Endothelial cell of umbilical vein (primary cell): ENCODE measurements at regions of chr1 and their contacts with region 1.

Region 1: GRCh38 chr1:31705080-31705866 is 1.5 kb upstream of the COL16A1 start:
- DNase-seq: no peak
- H3K4me3 ChIP-seq: no peak overlapping the region
- H3K27ac ChIP-seq: no peak overlapping the region
- H3K4me1 ChIP-seq: peaks cover 9% of the 10 kb centered on the region
- H3K27me3 ChIP-seq: peaks cover 0 to 3% of the 10 kb centered on the region in 2 experiments
- CTCF ChIP-seq: peak; percentile 5 to 12
- POLR2A ChIP-seq: no peak

Region 2: DNA sequence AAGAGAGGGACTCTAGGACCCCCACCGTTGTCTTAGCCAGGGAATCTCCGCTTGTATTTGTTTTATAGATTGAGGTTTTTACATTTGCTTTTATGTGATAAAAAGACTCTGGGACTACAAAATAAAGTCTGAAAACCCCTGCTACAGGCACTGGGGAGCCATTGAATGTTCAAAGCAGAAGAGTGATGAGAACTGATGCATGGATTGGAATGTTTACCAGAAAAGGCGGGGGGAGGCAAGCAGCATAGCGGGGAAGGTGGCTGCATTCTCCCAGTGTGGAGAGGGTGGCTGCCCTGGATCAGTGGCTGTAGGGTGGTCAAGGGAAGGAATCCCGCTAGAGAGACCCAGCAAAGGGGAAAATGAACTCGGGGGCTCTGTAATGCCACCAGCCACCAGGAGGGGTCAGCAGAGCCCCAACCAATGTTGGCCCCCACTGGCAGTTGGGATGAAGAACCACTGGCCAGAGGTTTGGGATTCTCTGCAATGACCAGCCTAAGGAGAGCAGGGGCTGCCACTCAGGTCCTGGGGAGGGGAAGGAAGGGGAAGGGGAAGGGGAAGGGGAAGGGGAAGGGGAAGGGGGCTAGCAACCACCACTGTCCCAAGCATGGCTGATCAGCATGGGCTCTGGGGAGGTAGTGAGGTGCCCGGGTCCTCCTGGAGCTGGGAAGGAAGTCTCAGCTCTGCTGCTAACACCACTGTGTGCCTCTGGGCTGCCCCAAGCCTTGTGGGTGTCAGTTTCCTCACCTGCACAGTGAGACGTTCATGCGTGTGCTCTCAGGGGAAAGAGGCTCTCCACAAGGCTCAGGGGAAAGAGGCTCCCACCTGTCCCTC is 41.4 kb before region 1 on chr1:
- CTCF ChIA-PET with region 1: interaction called, 51 read pairs
- POLR2A ChIA-PET with region 1: no interaction called
- dilution Hi-C with region 1: no loop called
- intact Hi-C with region 1: no loop called
- DNase-seq: peak; percentile 48
- H3K4me3 ChIP-seq: no peak overlapping the region
- H3K27ac ChIP-seq: no peak overlapping the region
- H3K4me1 ChIP-seq: no peaks in the 10 kb centered on the region
- H3K27me3 ChIP-seq: no peaks in the 10 kb centered on the region
- CTCF ChIP-seq: peak; percentile 86 to 90
- POLR2A ChIP-seq: no peak

Region 3: DNA sequence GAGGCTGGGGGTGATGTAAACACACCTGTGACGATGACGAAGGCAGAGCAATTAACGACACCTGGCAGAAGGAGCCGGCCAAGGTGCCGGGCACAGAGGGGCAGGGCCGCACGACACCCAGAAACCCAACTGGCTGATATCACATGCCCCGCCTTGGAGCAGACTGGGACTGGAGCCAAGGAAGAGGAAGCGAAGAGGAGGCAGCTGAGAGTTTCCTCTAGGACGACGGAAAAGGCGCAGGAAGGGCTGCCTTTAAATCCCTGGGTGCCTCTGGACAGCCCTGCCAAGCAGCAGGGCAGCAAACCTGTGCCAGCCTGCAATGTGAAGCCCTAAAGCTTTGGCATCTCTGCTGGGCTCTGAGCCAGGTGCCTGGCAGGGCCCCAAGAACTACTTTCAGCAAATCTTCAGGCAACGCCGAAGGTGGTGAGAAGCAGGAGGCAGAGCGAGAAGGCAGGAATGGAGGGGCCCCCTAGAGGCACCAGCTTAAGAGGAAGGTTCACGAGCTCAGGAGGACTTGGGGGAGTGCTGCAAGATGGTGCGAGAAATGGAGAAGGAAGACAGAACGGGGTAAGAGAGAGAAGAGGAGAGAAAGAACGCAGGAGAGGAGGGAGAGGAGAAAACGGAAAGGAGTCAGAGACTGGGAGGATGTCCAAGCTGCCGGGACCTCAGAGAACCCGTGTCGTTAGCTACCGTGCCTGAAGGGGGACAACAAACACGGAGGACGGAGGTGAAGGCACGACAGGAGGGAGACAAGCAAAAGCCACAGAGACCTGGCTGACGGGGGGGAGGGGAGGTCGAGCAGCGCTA is 35.3 kb before region 1 on chr1:
- CTCF ChIA-PET with region 1: interaction called, 51 read pairs
- POLR2A ChIA-PET with region 1: no interaction called
- dilution Hi-C with region 1: no loop called
- intact Hi-C with region 1: no loop called
- DNase-seq: peak; percentile 77
- H3K4me3 ChIP-seq: peak overlapping the region; percentile 7 to 31 (median 21)
- H3K27ac ChIP-seq: no peak overlapping the region
- H3K4me1 ChIP-seq: peaks cover 13% of the 10 kb centered on the region
- H3K27me3 ChIP-seq: no peaks in the 10 kb centered on the region
- CTCF ChIP-seq: peak; percentile 10 to 29
- POLR2A ChIP-seq: no peak

Region 4: DNA sequence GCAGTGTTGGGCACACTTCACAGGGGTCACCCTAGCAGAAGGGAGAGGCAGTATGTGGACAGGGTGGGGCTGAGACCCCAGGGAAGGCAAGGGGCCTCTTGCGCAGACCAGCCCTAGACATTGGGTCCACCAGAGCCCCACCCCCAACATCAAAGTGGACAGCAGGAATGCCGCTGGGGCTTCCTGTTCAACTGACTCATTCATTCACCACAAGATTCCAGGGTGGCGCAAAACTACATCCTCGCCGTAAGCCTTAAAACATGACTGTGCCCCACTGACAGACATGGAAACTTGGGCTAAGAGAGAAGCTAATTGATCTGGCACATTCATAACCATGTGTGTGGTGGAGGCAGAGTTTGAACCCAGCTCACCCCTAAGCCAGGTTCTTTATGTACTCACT is 15.5 kb before region 1 on chr1:
- CTCF ChIA-PET with region 1: interaction called, 6 read pairs
- POLR2A ChIA-PET with region 1: no interaction called
- dilution Hi-C with region 1: no loop called
- intact Hi-C with region 1: loop called (anchors 2 kb)
- DNase-seq: peak; percentile 67
- H3K4me3 ChIP-seq: no peak overlapping the region
- H3K27ac ChIP-seq: peak overlapping the region; percentile 85
- H3K4me1 ChIP-seq: peaks cover 13% of the 10 kb centered on the region
- H3K27me3 ChIP-seq: no peaks in the 10 kb centered on the region
- CTCF ChIP-seq: no peak
- POLR2A ChIP-seq: no peak